K562 (cell line): ENCODE measurements at regions of chr10 and their contacts with region 1.

Region 1: GRCh38 chr10:91298224-91298871 is 77.9 kb downstream of the PCGF5 start:
- DNase-seq: peak; percentile 66 to 78 (median 74)
- ATAC-seq: peak; percentile 91
- H3K4me3 ChIP-seq: no peak overlapping the region
- H3K27ac ChIP-seq: no peak overlapping the region
- H3K4me1 ChIP-seq: peaks cover 0 to 3% of the 10 kb centered on the region in 2 experiments; a peak in 1 of 5 replicates
- H3K27me3 ChIP-seq: no peaks in the 10 kb centered on the region
- CTCF ChIP-seq: peak; percentile 81 to 88 (median 88)
- EP300 ChIP-seq: no peak
- POLR2A ChIP-seq: no peak
- RAD21 ChIP-seq: peak; percentile 89 to 91

Region 2: GRCh38 chr10:90912174-90912573 is 386.2 kb before region 1 on chr10:
- CTCF ChIA-PET with region 1: interaction called, 3 read pairs
- POLR2A ChIA-PET with region 1: no interaction called
- in situ Hi-C with region 1: no loop called
- intact Hi-C with region 1: loop called (anchors 1 kb)
- DNase-seq: no peak
- ATAC-seq: no peak
- H3K4me3 ChIP-seq: no peak overlapping the region
- H3K27ac ChIP-seq: no peak overlapping the region
- H3K4me1 ChIP-seq: no peaks in the 10 kb centered on the region; a peak in 1 of 5 replicates
- H3K27me3 ChIP-seq: peaks cover 4 to 5% of the 10 kb centered on the region in 2 experiments; a peak in 2 of 5 replicates
- CTCF ChIP-seq: no peak
- EP300 ChIP-seq: no peak
- POLR2A ChIP-seq: no peak
- RAD21 ChIP-seq: no peak

Region 3: DNA sequence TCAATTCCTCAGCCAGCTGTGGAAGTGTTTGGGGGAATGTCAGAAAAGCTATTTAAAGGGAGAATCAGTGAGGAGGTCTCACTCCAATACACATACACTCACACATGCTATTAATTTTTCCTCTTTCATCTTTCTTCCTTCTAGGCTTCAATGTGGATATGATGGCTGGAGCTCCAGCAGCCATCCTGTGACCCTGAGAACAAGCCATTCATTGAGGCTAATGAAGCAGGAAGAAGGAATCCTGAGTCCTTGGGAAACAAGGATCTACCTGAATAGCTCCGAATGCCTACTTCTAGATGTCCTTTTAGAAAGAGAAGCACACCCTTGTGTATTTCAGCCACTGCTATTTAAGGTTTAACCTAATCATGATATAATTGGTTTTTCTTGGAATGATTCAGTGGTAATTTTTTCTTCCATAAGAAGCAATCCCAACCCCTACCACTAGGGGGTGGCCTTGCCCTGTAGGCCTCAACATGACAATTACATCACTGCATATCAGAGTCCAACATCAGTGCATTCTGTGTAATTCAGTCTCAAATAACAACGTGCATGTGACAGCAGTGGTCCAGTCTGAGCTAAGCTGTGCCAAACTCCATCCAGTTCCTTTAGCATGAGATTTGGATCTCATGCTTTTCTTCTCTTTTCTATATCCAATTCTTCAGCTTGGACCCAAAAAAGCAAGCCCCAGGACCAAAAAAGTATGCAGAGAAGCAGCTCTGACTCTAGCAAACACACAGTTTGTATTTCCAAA is 292.2 kb before region 1 on chr10:
- CTCF ChIA-PET with region 1: no interaction called
- POLR2A ChIA-PET with region 1: no interaction called
- in situ Hi-C with region 1: no loop called
- intact Hi-C with region 1: loop called (anchors 2 kb)
- DNase-seq: peak; percentile 41 to 66 (median 45)
- ATAC-seq: peak; percentile 78
- H3K4me3 ChIP-seq: no peak overlapping the region
- H3K27ac ChIP-seq: no peak overlapping the region
- H3K4me1 ChIP-seq: no peaks in the 10 kb centered on the region
- H3K27me3 ChIP-seq: no peaks in the 10 kb centered on the region
- CTCF ChIP-seq: peak; percentile 69 to 85 (median 80)
- EP300 ChIP-seq: no peak
- POLR2A ChIP-seq: no peak
- RAD21 ChIP-seq: peak; percentile 81 to 87

Region 4: DNA sequence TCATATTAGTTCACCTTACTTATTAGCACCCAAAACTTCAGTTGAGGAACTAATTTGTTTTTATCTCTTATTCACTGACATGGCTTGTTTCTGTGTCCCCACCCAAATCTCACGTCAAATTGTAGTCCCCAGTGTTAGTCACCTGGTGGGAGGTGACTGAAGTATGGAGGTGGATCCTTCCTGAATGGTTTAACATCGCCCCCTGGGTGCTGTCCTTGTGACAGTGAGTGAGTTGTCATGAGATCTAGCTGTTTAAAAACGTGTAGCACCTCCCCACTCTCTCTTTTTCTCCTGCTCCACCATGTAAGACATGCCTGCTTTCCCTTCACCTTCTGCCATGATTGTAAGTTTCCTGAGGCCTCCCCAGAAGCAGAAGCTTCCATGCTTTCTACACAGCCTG is 36.8 kb after region 1 on chr10:
- CTCF ChIA-PET with region 1: no interaction called
- POLR2A ChIA-PET with region 1: interaction called, 3 read pairs
- in situ Hi-C with region 1: no loop called
- intact Hi-C with region 1: loop called (anchors 1 kb)
- DNase-seq: peak in 1 of 4 experiments; percentile 20
- ATAC-seq: peak; percentile 59
- H3K4me3 ChIP-seq: no peak overlapping the region
- H3K27ac ChIP-seq: no peak overlapping the region
- H3K4me1 ChIP-seq: no peaks in the 10 kb centered on the region
- H3K27me3 ChIP-seq: no peaks in the 10 kb centered on the region
- CTCF ChIP-seq: peak in 2 of 3 experiments; percentile 20 to 35; a peak in 2 of 6 replicates
- EP300 ChIP-seq: no peak
- POLR2A ChIP-seq: no peak
- RAD21 ChIP-seq: peak in 1 of 2 experiments; percentile 9; a peak in 1 of 4 replicates

Region 5: GRCh38 chr10:91541481-91541880 is 243.1 kb after region 1 on chr10:
- CTCF ChIA-PET with region 1: no interaction called
- POLR2A ChIA-PET with region 1: no interaction called
- in situ Hi-C with region 1: loop called (anchors 10 kb)
- intact Hi-C with region 1: no loop called
- DNase-seq: no peak
- ATAC-seq: no peak
- H3K4me3 ChIP-seq: no peak overlapping the region
- H3K27ac ChIP-seq: no peak overlapping the region
- H3K4me1 ChIP-seq: no peaks in the 10 kb centered on the region
- H3K27me3 ChIP-seq: no peaks in the 10 kb centered on the region; a peak in 1 of 5 replicates
- CTCF ChIP-seq: no peak
- EP300 ChIP-seq: no peak
- POLR2A ChIP-seq: no peak
- RAD21 ChIP-seq: no peak

Region 6: DNA sequence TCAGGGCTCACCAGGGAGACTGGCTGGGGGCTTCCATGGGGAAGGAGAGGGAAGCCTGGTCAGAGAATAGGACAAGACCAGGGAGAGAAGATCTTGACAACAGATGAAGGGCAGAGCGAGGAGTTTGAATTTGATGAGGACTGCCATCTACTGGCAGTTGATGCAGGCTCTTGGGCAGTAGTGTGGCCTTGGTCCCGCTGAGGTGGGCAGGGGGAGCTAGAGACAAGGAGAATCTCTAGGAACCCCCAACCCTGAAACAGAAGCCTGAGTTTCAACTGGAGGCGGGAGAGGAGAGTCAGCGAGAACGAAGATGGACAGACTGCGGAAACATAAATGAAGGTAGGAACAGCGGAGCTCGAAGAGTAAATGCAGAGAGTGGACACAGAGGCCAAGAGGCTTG is 253.5 kb after region 1 on chr10:
- CTCF ChIA-PET with region 1: interaction called, 5 read pairs
- POLR2A ChIA-PET with region 1: no interaction called
- in situ Hi-C with region 1: loop called (anchors 10 kb)
- intact Hi-C with region 1: loop called (anchors 2 kb)
- DNase-seq: peak; percentile 27 to 74 (median 48)
- ATAC-seq: peak; percentile 96
- H3K4me3 ChIP-seq: no peak overlapping the region
- H3K27ac ChIP-seq: no peak overlapping the region
- H3K4me1 ChIP-seq: no peaks in the 10 kb centered on the region; a peak in 2 of 5 replicates
- H3K27me3 ChIP-seq: no peaks in the 10 kb centered on the region
- CTCF ChIP-seq: peak; percentile 85 to 99 (median 98)
- EP300 ChIP-seq: no peak
- POLR2A ChIP-seq: no peak
- RAD21 ChIP-seq: peak; percentile 93 to 95

Region 7: DNA sequence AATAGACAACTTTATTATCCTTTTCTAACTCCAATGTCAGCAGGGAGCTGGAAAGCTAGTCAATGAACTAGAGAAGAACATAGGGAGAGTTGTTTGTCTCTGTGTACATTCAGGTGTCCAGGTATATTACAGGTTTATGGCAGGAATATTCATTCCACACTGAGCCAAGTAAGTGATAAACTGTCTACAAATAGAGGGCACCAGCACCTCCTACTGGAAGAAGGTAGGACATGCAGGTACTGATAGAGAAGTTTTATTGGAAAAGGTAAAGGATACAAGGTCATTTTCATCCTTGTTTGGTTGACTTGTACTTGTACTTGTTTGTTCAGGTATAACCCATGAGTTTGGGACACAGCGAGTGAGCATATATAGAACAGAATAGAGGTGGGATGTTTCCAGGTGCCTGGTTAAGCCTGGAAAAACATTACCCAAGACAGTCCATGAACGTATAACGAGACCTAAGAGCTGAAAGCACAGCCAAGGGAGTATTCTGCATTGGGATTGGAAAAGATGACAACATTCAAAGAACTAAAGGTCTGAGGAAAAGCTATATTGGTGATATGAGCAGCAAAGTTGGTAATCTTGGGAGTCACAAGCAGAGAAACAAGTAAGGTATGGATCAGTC is 395.9 kb after region 1 on chr10:
- CTCF ChIA-PET with region 1: interaction called, 8 read pairs
- POLR2A ChIA-PET with region 1: no interaction called
- in situ Hi-C with region 1: no loop called
- intact Hi-C with region 1: loop called (anchors 2 kb)
- DNase-seq: peak; percentile 42 to 59 (median 44)
- ATAC-seq: peak; percentile 74
- H3K4me3 ChIP-seq: no peak overlapping the region
- H3K27ac ChIP-seq: no peak overlapping the region
- H3K4me1 ChIP-seq: peaks cover 0 to 6% of the 10 kb centered on the region in 2 experiments; a peak in 2 of 5 replicates
- H3K27me3 ChIP-seq: no peaks in the 10 kb centered on the region
- CTCF ChIP-seq: peak; percentile 57 to 75 (median 68)
- EP300 ChIP-seq: no peak
- POLR2A ChIP-seq: no peak
- RAD21 ChIP-seq: peak; percentile 79 to 90